ENCODE measurements at regions of chr1 and their contacts with region 1.

Region 1: GRCh38 chr1:214864896-214865688 is 217.4 kb upstream of the KCNK2 start:
- DNase-seq: peak; percentile 56
- H3K4me3 Mint-ChIP-seq: no peak overlapping the region
- H3K27ac Mint-ChIP-seq: peak overlapping the region; percentile 69
- H3K4me1 Mint-ChIP-seq: peaks cover 25% of the 10 kb centered on the region
- H3K27me3 Mint-ChIP-seq: no peaks in the 10 kb centered on the region
- CTCF ChIP-seq: no peak

Region 2: GRCh38 chr1:214753236-214753852 is 111.7 kb before region 1 on chr1:
- CTCF ChIA-PET with region 1: no interaction called
- intact Hi-C with region 1: no loop called
- DNase-seq: no peak
- H3K4me3 Mint-ChIP-seq: no peak overlapping the region
- H3K27ac Mint-ChIP-seq: no peak overlapping the region
- H3K4me1 Mint-ChIP-seq: no peaks in the 10 kb centered on the region
- H3K27me3 Mint-ChIP-seq: no peaks in the 10 kb centered on the region
- CTCF ChIP-seq: no peak

Region 3: GRCh38 chr1:214840356-214840755 is 24.7 kb before region 1 on chr1:
- CTCF ChIA-PET with region 1: no interaction called
- intact Hi-C with region 1: loop called (anchors 2 kb)
- DNase-seq: no peak
- H3K4me3 Mint-ChIP-seq: no peak overlapping the region
- H3K27ac Mint-ChIP-seq: no peak overlapping the region
- H3K4me1 Mint-ChIP-seq: peaks cover 8% of the 10 kb centered on the region
- H3K27me3 Mint-ChIP-seq: no peaks in the 10 kb centered on the region
- CTCF ChIP-seq: no peak

Region 4: GRCh38 chr1:214901718-214902117 is 36.6 kb after region 1 on chr1:
- CTCF ChIA-PET with region 1: no interaction called
- intact Hi-C with region 1: loop called (anchors 2 kb)
- DNase-seq: peak; percentile 28
- H3K4me3 Mint-ChIP-seq: no peak overlapping the region
- H3K27ac Mint-ChIP-seq: peak overlapping the region; percentile 27
- H3K4me1 Mint-ChIP-seq: peaks cover 26% of the 10 kb centered on the region
- H3K27me3 Mint-ChIP-seq: no peaks in the 10 kb centered on the region
- CTCF ChIP-seq: no peak

Measured in Calu3 (cell line).